ENCODE measurements at regions of chr1 and their contacts with region 1.

Region 1: GRCh38 chr1:240199758-240200645 is 108.3 kb downstream of the FMN2 start:
- DNase-seq: peak; percentile 67
- H3K4me3 ChIP-seq: no peak overlapping the region
- H3K27ac ChIP-seq: peak overlapping the region; percentile 27 to 86; a peak in 3 of 4 replicates
- H3K4me1 ChIP-seq: peaks cover 0 to 6% of the 10 kb centered on the region in 2 experiments; a peak in 2 of 4 replicates
- H3K27me3 ChIP-seq: no peaks in the 10 kb centered on the region
- CTCF ChIP-seq: no peak
- EP300 ChIP-seq: peak in 1 of 2 experiments; percentile 75; a peak in 2 of 4 replicates
- RAD21 ChIP-seq: peak; percentile 20; the same call in 1 of the 2 replicates

Region 2: GRCh38 chr1:240189386-240189989 is 10.5 kb before region 1 on chr1:
- CTCF ChIA-PET with region 1: interaction called, 12 read pairs
- POLR2A ChIA-PET with region 1: no interaction called
- DNase-seq: peak; percentile 44
- H3K4me3 ChIP-seq: no peak overlapping the region; a peak in 1 of 4 replicates
- H3K27ac ChIP-seq: no peak overlapping the region; a peak in 1 of 4 replicates
- H3K4me1 ChIP-seq: peaks cover 15 to 29% of the 10 kb centered on the region in 2 experiments; a peak in 3 of 4 replicates
- H3K27me3 ChIP-seq: no peaks in the 10 kb centered on the region
- CTCF ChIP-seq: peak; percentile 91
- EP300 ChIP-seq: no peak
- RAD21 ChIP-seq: peak; percentile 74

Measured in SK-N-SH (cell line).